ENCODE measurements at regions of chr4 and their contacts with region 1.

Region 1: GRCh38 chr4:139761461-139761860 is 95.8 kb downstream of the MGST2 start:
- DNase-seq: peak; percentile 32
- H3K4me3 ChIP-seq: no peak overlapping the region
- H3K27ac ChIP-seq: peak overlapping the region in 1 of 2 experiments; percentile 94; a peak in 2 of 4 replicates
- H3K4me1 ChIP-seq: peaks cover 18 to 63% of the 10 kb centered on the region in 2 experiments; a peak in 3 of 4 replicates
- H3K27me3 ChIP-seq: no peaks in the 10 kb centered on the region
- CTCF ChIP-seq: peak; percentile 45
- EP300 ChIP-seq: no peak
- RAD21 ChIP-seq: peak; percentile 45

Region 2: DNA sequence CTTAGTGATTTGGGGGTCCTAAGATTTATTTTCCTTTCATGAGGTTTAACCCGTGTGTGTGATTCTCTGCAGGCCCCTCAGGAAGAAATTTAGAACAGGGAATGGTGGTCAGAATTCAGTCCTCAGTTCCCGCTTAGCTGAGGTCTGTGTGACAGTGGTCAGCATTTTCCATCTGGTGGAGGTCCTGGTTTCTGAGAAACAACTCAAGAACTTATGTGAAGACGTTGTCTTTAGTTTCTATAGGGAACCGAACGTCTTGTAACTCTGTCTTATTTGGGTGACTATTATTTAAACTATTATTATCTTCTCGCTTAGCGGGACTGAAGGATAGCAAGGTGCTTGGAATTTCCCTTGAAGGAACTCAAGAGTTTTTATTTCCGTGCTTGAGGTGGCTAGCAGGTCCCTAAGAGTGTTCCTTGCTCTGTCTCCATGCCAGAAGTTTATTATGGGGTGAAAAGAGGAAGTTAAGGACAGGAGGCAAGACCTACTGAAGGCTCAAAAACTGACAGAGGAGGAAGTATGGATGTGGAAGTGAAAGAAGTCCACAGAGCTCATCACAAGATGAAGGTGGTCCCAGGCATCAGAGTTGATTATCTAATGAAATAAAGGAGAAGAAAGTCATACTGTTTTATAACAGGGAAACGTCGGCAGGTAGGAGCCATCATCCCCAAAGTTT is 86.4 kb before region 1 on chr4:
- CTCF ChIA-PET with region 1: no interaction called
- POLR2A ChIA-PET with region 1: no interaction called
- DNase-seq: no peak
- H3K4me3 ChIP-seq: no peak overlapping the region
- H3K27ac ChIP-seq: no peak overlapping the region
- H3K4me1 ChIP-seq: no peaks in the 10 kb centered on the region; a peak in 1 of 4 replicates
- H3K27me3 ChIP-seq: no peaks in the 10 kb centered on the region
- CTCF ChIP-seq: no peak
- EP300 ChIP-seq: no peak
- RAD21 ChIP-seq: no peak

Region 3: GRCh38 chr4:139749338-139749737 is 12.1 kb before region 1 on chr4:
- CTCF ChIA-PET with region 1: interaction called, 19 read pairs
- POLR2A ChIA-PET with region 1: no interaction called
- DNase-seq: no peak
- H3K4me3 ChIP-seq: no peak overlapping the region
- H3K27ac ChIP-seq: peak overlapping the region in 1 of 2 experiments; percentile 12; a peak in 1 of 4 replicates
- H3K4me1 ChIP-seq: peaks cover 0 to 26% of the 10 kb centered on the region in 2 experiments; a peak in 2 of 4 replicates
- H3K27me3 ChIP-seq: no peaks in the 10 kb centered on the region
- CTCF ChIP-seq: no peak
- EP300 ChIP-seq: no peak
- RAD21 ChIP-seq: no peak

Measured in SK-N-SH (cell line).